GM13977 (cell line): ENCODE measurements at regions of chr5 and their contacts with region 1.

Region 1: GRCh38 chr5:115831163-115831768 is 10.1 kb downstream of the ATG12 start:
- DNase-seq: peak; percentile 46
- CTCF ChIP-seq: peak; percentile 77

Region 2: DNA sequence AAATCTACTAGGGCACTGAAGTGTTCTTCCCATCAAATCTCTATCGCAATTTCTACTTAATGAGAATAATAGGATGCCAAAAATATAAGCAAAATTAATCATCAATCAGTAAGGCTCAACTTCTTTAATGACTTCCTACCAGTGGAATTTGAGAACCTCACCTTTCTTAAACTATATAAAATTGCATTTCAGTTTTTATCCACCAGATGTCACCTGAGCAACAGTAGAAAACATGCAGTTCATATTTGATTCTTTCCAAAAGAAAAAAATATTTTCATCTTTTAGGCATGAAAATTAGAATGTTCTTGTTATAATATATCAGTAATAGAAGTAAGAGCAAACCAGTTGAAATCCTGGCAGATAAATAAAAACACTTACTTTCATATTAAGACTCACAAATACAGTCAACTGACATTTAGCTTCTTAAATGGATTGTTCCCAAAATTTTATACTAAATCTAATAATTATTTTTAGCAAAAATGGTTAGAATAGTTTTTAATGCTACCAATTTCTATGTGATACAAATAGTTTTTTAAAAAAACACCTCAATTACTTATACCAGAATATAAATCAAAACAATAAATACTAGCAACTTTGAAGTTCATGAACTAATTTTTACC is 521.4 kb before region 1 on chr5:
- in situ Hi-C with region 1: loop called (anchors 10 kb)
- DNase-seq: no peak
- CTCF ChIP-seq: peak; percentile 55

Region 3: GRCh38 chr5:115735108-115735998 is 95.9 kb before region 1 on chr5:
- in situ Hi-C with region 1: no loop called
- DNase-seq: no peak
- CTCF ChIP-seq: no peak

Region 4: GRCh38 chr5:115770466-115770865 is 60.8 kb before region 1 on chr5:
- in situ Hi-C with region 1: no loop called
- DNase-seq: no peak
- CTCF ChIP-seq: peak; percentile 48

Region 5: GRCh38 chr5:116144103-116144502 is 312.8 kb after region 1 on chr5:
- in situ Hi-C with region 1: no loop called
- DNase-seq: no peak
- CTCF ChIP-seq: no peak